Activated CD8-positive, alpha-beta T cell treated with anti-CD3 and anti-CD28 coated beads for 36 hours (primary cell): ENCODE measurements at regions of chr15 and their contacts with region 1.

Region 1: GRCh38 chr15:81265944-81266775 is 57.8 kb downstream of the STARD5 start:
- DNase-seq: peak; percentile 92
- ATAC-seq: peak; percentile 83
- H3K4me3 Mint-ChIP-seq: peak overlapping the region; percentile 56
- H3K27ac Mint-ChIP-seq: peak overlapping the region; percentile 82
- H3K4me1 Mint-ChIP-seq: peaks cover 49% of the 10 kb centered on the region
- H3K27me3 Mint-ChIP-seq: peaks cover 3% of the 10 kb centered on the region
- CTCF ChIP-seq: peak; percentile 68

Region 2: DNA sequence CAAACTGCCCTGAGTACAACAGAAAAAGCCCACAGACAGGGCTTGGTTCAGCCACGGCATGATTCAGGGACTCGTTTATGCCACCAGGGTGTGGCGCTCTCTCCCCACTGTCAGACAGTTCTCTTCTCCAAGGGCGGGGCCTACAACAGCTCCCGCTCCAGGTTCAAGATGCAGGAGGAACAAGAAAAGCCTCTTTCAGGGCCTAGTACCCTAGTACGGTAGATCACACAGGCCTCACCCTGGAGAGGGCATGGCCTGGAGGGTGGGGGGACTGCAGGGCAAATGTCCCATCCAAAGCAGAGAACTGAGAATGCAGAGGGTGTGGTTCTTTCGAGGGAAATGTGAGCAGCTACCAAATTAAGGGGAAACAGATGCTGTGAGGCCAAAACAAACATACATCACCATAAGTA is 288.5 kb before region 1 on chr15:
- CTCF ChIA-PET with region 1: interaction called, 34 read pairs
- POLR2A ChIA-PET with region 1: interaction called, 3 read pairs
- intact Hi-C with region 1: no loop called
- DNase-seq: peak; percentile 69
- ATAC-seq: peak; percentile 80
- H3K4me3 Mint-ChIP-seq: no peak overlapping the region
- H3K27ac Mint-ChIP-seq: peak overlapping the region; percentile 31
- H3K4me1 Mint-ChIP-seq: peaks cover 48% of the 10 kb centered on the region
- H3K27me3 Mint-ChIP-seq: no peaks in the 10 kb centered on the region
- CTCF ChIP-seq: peak; percentile 51

Region 3: GRCh38 chr15:81073801-81074200 is 192.4 kb before region 1 on chr15:
- CTCF ChIA-PET with region 1: interaction called, 14 read pairs
- POLR2A ChIA-PET with region 1: no interaction called
- intact Hi-C with region 1: no loop called
- DNase-seq: peak; percentile 10
- ATAC-seq: peak; percentile 66
- H3K4me3 Mint-ChIP-seq: no peak overlapping the region
- H3K27ac Mint-ChIP-seq: no peak overlapping the region
- H3K4me1 Mint-ChIP-seq: peaks cover 11% of the 10 kb centered on the region
- H3K27me3 Mint-ChIP-seq: peaks cover 6% of the 10 kb centered on the region
- CTCF ChIP-seq: no peak

Region 4: GRCh38 chr15:81170511-81170910 is 95.6 kb before region 1 on chr15:
- CTCF ChIA-PET with region 1: interaction called, 21 read pairs
- POLR2A ChIA-PET with region 1: no interaction called
- intact Hi-C with region 1: no loop called
- DNase-seq: no peak
- ATAC-seq: no peak
- H3K4me3 Mint-ChIP-seq: no peak overlapping the region
- H3K27ac Mint-ChIP-seq: no peak overlapping the region
- H3K4me1 Mint-ChIP-seq: peaks cover 2% of the 10 kb centered on the region
- H3K27me3 Mint-ChIP-seq: peaks cover 14% of the 10 kb centered on the region
- CTCF ChIP-seq: no peak

Region 5: GRCh38 chr15:81244306-81244705 is 21.9 kb before region 1 on chr15:
- CTCF ChIA-PET with region 1: interaction called, 35 read pairs
- POLR2A ChIA-PET with region 1: no interaction called
- intact Hi-C with region 1: no loop called
- DNase-seq: no peak
- ATAC-seq: no peak
- H3K4me3 Mint-ChIP-seq: no peak overlapping the region
- H3K27ac Mint-ChIP-seq: no peak overlapping the region
- H3K4me1 Mint-ChIP-seq: no peaks in the 10 kb centered on the region
- H3K27me3 Mint-ChIP-seq: no peaks in the 10 kb centered on the region
- CTCF ChIP-seq: no peak

Region 6: GRCh38 chr15:81323944-81324881 is 58.1 kb after region 1 on chr15 and contains the start of gene STARD5:
- CTCF ChIA-PET with region 1: interaction called, 22 read pairs
- POLR2A ChIA-PET with region 1: interaction called, 3 read pairs
- intact Hi-C with region 1: loop called (anchors 5 kb)
- DNase-seq: peak; percentile 98
- ATAC-seq: peak; percentile 100
- H3K4me3 Mint-ChIP-seq: peak within 1 kb of the TSS; percentile 84
- H3K27ac Mint-ChIP-seq: peak within 1 kb of the TSS; percentile 86
- H3K4me1 Mint-ChIP-seq: peaks cover 37% of the 10 kb centered on the region
- H3K27me3 Mint-ChIP-seq: no peaks in the 10 kb centered on the region
- CTCF ChIP-seq: no peak
- total RNA-seq, gene STARD5: 6.7 to 6.9 TPM